ENCODE measurements at regions of chr4 and their contacts with region 1.

Region 1: DNA sequence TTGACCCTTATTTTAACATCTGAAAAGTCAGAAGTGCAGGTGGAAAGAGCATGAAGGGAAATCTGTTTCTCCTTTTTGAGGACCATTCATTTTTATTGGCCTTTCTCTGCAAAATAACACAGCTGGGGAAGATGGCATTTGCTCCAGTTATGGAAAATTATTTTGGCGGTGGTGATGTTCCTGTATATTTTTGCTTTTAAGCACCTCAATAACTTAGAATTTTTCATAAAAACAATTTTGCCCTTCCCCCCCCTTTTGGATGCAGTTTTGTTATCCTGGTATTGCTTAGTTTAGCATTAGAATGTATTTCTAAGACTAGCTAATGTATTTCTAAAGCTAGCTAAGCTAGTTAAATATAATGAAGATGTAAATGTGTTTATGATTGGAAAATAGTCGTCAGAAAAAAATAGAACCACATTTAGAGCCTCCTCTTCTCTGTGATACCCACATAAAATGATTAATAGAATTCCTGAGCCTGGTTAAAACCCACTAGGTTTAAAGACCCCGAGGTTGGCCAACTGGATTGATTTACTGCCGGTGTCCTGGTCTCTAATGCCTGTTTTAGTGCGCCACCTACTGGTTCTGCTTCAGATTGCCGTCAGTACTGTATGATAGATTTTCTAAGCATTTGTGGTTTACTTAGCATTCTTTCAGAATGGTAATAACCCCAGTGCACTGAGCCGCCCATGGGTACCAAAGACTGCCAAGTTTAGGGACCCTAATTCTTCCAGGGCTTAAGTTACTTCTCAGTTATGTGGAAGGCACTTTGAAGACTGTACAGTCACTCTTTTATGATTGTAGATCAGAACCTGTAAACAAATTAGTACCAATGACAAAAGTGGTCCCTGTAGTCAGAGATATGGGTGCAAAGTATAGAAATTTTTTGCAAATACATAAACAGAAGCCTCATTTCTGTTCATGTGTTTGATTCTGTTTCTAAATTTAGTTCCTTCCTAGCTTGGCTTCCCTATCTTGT is 11.4 kb downstream of the KLF3 start:
- DNase-seq: peak; percentile 87
- H3K4me3 Mint-ChIP-seq: peak overlapping the region; percentile 45
- H3K27ac Mint-ChIP-seq: no peak overlapping the region
- H3K4me1 Mint-ChIP-seq: peaks cover 68% of the 10 kb centered on the region
- H3K27me3 Mint-ChIP-seq: no peaks in the 10 kb centered on the region
- CTCF ChIP-seq: peak; percentile 84

Region 2: DNA sequence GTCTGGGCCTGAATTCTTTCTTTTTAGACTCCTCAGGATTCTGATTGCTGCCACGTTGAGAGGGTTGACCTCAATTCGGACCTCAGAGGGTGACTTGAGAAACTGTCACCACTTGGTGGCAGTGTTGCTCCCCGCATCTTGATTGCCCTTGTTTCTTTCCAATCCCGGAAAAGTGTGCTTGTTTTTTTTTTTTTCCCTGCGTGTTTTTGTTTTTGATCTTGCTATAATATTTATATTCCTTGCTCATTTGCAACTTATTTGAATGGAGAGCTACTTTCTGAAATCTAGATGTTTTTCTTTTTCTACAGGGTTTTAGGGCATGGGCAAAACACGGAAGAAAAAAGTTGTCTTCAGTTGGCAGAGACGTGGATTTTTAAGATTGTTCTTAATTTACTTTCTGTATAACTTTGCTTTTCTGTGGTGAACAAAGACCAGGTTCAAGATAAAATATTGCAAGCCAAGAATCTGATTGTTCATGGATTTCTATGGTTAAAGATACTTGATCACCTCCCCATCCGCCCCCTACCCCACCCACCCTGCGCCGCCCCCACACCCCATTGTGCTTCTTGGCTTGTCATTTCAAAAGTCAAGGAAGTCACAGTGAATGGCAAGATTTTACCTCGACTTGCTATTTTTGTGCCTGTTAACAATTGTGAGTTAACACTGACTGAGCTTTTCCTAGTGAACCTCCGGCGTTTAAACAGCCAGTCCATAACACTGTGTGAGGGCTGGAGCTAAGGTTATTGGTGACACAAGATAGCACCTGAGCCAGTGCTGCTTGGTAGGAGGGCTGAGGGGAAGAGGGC is 613.1 kb before region 1 on chr4:
- CTCF ChIA-PET with region 1: interaction called, 5 read pairs
- POLR2A ChIA-PET with region 1: interaction called, 3 read pairs
- intact Hi-C with region 1: loop called (anchors 1 kb)
- DNase-seq: peak; percentile 83
- H3K4me3 Mint-ChIP-seq: peak overlapping the region; percentile 66
- H3K27ac Mint-ChIP-seq: peak overlapping the region; percentile 57
- H3K4me1 Mint-ChIP-seq: peaks cover 5% of the 10 kb centered on the region
- H3K27me3 Mint-ChIP-seq: no peaks in the 10 kb centered on the region
- CTCF ChIP-seq: peak; percentile 83

Region 3: GRCh38 chr4:38387348-38387747 is 288.1 kb before region 1 on chr4:
- CTCF ChIA-PET with region 1: interaction called, 22 read pairs
- POLR2A ChIA-PET with region 1: interaction called, 52 read pairs
- intact Hi-C with region 1: no loop called
- DNase-seq: peak; percentile 84
- H3K4me3 Mint-ChIP-seq: no peak overlapping the region
- H3K27ac Mint-ChIP-seq: no peak overlapping the region
- H3K4me1 Mint-ChIP-seq: peaks cover 28% of the 10 kb centered on the region
- H3K27me3 Mint-ChIP-seq: no peaks in the 10 kb centered on the region
- CTCF ChIP-seq: no peak

Region 4: GRCh38 chr4:38620790-38621684 is 54.4 kb before region 1 on chr4:
- CTCF ChIA-PET with region 1: interaction called, 6 read pairs
- POLR2A ChIA-PET with region 1: interaction called, 18 read pairs
- intact Hi-C with region 1: no loop called
- DNase-seq: peak; percentile 95
- H3K4me3 Mint-ChIP-seq: no peak overlapping the region
- H3K27ac Mint-ChIP-seq: peak overlapping the region; percentile 57
- H3K4me1 Mint-ChIP-seq: peaks cover 29% of the 10 kb centered on the region
- H3K27me3 Mint-ChIP-seq: no peaks in the 10 kb centered on the region
- CTCF ChIP-seq: no peak

Region 5: GRCh38 chr4:38730830-38731646 is 55.6 kb after region 1 on chr4:
- CTCF ChIA-PET with region 1: interaction called, 5 read pairs
- POLR2A ChIA-PET with region 1: no interaction called
- intact Hi-C with region 1: loop called (anchors 1 kb)
- DNase-seq: peak; percentile 81
- H3K4me3 Mint-ChIP-seq: no peak overlapping the region
- H3K27ac Mint-ChIP-seq: no peak overlapping the region
- H3K4me1 Mint-ChIP-seq: peaks cover 16% of the 10 kb centered on the region
- H3K27me3 Mint-ChIP-seq: no peaks in the 10 kb centered on the region
- CTCF ChIP-seq: peak; percentile 97

Region 6: DNA sequence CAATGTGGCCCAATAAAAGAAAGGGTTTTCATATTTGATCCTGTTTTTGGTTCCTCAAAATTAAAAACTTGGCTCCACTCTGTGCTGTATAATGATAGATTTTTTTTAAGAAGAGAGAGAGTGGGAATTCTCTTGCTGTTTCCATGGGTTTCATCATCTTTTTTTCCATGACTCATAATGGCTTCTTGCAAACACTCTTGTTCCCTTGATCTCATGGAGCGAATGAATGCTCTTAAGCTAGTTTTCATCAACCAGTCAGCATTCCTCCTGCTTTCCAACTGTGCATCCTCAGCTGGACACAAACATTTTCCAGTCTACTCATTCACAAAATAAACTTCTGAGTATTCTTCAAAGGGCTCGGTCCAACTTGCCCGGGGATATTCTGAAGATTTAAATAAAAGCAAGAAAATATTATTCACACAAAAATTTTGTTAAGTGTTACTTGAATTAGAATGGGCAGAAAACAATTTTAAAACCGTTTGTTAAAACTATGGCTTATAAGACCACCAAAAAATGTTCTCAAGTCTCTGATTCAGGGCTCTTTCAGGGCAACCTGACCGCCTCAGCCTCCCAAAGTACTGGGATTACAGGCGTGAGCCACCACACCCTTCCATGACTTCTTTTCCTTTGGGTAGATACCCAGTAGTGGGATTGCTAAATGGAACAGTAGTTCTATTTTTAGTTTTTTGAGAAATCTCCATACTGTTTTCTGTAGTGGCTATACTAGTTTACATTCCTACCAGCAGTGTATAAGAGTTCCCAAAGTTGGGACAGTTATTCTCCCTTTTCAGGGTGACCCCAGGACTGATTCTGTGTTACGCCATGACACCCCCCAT is 292.0 kb after region 1 on chr4:
- CTCF ChIA-PET with region 1: no interaction called
- POLR2A ChIA-PET with region 1: no interaction called
- intact Hi-C with region 1: no loop called
- DNase-seq: peak; percentile 88
- H3K4me3 Mint-ChIP-seq: no peak overlapping the region
- H3K27ac Mint-ChIP-seq: peak overlapping the region; percentile 92
- H3K4me1 Mint-ChIP-seq: peaks cover 7% of the 10 kb centered on the region
- H3K27me3 Mint-ChIP-seq: no peaks in the 10 kb centered on the region
- CTCF ChIP-seq: no peak

Region 7: GRCh38 chr4:39004758-39005157 is 329.3 kb after region 1 on chr4:
- CTCF ChIA-PET with region 1: no interaction called
- POLR2A ChIA-PET with region 1: no interaction called
- intact Hi-C with region 1: no loop called
- DNase-seq: no peak
- H3K4me3 Mint-ChIP-seq: no peak overlapping the region
- H3K27ac Mint-ChIP-seq: no peak overlapping the region
- H3K4me1 Mint-ChIP-seq: no peaks in the 10 kb centered on the region
- H3K27me3 Mint-ChIP-seq: no peaks in the 10 kb centered on the region
- CTCF ChIP-seq: no peak